A549 (cell line): ENCODE measurements at regions of chr10 and their contacts with region 1.

Region 1: DNA sequence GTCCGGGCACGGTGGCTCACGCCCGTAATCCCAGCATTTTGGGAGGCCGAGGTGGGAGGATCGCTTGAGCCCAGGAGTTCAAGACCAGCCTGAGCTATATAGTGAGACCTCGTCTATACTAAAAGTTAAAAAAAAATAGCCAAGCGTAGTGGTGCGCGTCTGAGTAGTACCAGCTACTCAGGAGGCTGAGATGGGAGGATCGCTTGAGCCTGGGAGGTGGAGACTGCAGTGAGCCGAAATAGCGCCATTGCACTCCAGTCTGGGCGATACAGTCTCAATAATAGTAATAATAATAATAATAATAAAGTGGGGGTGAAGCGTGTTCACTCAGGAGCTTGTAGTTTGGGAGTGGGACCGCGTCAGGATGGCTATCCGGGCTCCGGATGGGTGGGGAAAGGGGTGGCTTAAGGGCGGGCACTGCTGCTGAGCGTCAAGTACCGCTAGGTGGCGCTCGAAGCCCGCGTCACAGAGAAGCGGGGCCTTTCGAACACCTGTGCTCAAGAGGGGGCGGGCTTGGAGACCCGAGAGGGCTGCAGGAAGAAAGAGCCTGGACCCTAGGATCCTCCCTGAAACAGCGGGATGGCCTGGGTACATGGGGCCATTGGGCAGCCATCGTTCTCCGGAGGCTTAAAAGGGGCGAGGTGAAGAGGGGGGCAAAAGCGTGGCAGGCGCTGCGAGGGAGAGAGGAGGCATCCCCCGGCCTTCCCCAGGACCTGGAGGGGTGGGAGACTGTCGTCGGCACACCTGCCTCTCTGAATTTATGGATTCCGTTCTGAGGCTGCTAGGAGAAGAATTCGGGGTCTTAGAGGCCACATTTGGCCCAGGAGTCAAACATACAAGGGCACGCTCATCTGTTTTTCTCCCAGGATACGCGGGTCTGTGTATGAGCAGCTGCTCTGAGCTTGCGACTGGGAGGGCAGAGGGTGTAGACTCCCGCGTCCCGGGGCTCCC is 14.5 kb downstream of the LBX1 start:
- DNase-seq: peak; percentile 66 to 74
- ATAC-seq: peak; percentile 69 to 86
- H3K4me3 ChIP-seq: peak overlapping the region; percentile 40
- H3K27ac ChIP-seq: no peak overlapping the region
- H3K4me1 ChIP-seq: no peaks in the 10 kb centered on the region
- CTCF ChIP-seq: peak; percentile 93
- EP300 ChIP-seq: no peak
- POLR2A ChIP-seq: no peak
- RAD21 ChIP-seq: peak; percentile 91 to 93

Region 2: GRCh38 chr10:101130984-101131961 is 83.4 kb before region 1 on chr10 and contains the start of gene TLX1:
- CTCF ChIA-PET with region 1: no interaction called
- POLR2A ChIA-PET with region 1: no interaction called
- DNase-seq: no peak
- ATAC-seq: peak; percentile 32 to 66; a peak in 3 of 6 replicates
- H3K4me3 ChIP-seq: peak within 1 kb of the TSS; percentile 33; the same call in 2 of the 3 replicates
- H3K27ac ChIP-seq: peak within 1 kb of the TSS in 1 of 2 experiments; percentile 53; a peak in 2 of 6 replicates
- H3K4me1 ChIP-seq: no peaks in the 10 kb centered on the region
- CTCF ChIP-seq: no peak
- EP300 ChIP-seq: no peak
- POLR2A ChIP-seq: no peak
- RAD21 ChIP-seq: no peak
- polyA plus RNA-seq, gene TLX1: 0.06 and 0.09 TPM in 2 replicates

Region 3: DNA sequence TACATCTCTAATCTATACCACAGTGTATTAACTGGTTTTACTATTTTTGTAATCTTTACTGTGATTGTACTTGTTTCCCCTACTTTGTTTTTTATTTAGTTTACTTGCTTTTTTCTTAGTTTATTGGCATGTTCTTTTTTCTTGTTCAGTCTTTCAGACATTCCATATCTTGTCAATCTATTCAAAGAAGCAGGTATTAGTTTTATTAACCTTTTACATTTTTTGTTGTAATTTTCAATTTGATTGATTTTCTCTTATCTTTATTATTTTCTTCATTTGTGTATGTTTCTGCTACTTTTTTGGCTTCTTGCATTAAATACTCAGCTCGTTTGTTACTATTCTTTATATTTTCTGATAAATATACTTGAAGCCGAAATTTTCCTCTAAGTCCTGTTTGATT is 42.0 kb before region 1 on chr10:
- CTCF ChIA-PET with region 1: interaction called, 12 read pairs
- POLR2A ChIA-PET with region 1: no interaction called
- DNase-seq: no peak
- ATAC-seq: no peak
- H3K4me3 ChIP-seq: no peak overlapping the region
- H3K27ac ChIP-seq: no peak overlapping the region
- H3K4me1 ChIP-seq: no peaks in the 10 kb centered on the region
- CTCF ChIP-seq: no peak
- EP300 ChIP-seq: no peak
- POLR2A ChIP-seq: no peak
- RAD21 ChIP-seq: no peak

Region 4: DNA sequence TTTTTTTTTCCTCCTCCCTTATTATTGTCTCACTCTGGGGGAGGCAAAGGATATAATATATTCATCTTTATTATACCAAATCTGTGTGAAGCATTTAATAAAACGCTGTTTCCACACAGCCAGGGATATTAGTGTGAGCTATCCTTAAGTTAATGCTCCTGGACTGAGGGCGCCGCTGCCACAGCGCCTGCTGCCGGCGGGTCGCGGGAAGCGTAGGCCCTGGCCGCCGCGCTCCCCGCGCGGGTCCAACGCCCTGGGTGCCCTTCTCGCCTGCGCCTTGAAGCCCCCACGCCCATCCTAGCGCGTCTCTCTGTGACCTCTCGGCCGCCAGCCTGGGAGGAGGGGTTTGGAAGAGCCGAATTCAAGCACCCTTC is 24.0 kb after region 1 on chr10:
- CTCF ChIA-PET with region 1: interaction called, 63 read pairs
- POLR2A ChIA-PET with region 1: no interaction called
- DNase-seq: no peak
- ATAC-seq: peak; percentile 49 to 82; a peak in 4 of 6 replicates
- H3K4me3 ChIP-seq: no peak overlapping the region
- H3K27ac ChIP-seq: no peak overlapping the region
- H3K4me1 ChIP-seq: no peaks in the 10 kb centered on the region
- CTCF ChIP-seq: peak; percentile 47
- EP300 ChIP-seq: no peak
- POLR2A ChIP-seq: no peak
- RAD21 ChIP-seq: no peak

Region 5: DNA sequence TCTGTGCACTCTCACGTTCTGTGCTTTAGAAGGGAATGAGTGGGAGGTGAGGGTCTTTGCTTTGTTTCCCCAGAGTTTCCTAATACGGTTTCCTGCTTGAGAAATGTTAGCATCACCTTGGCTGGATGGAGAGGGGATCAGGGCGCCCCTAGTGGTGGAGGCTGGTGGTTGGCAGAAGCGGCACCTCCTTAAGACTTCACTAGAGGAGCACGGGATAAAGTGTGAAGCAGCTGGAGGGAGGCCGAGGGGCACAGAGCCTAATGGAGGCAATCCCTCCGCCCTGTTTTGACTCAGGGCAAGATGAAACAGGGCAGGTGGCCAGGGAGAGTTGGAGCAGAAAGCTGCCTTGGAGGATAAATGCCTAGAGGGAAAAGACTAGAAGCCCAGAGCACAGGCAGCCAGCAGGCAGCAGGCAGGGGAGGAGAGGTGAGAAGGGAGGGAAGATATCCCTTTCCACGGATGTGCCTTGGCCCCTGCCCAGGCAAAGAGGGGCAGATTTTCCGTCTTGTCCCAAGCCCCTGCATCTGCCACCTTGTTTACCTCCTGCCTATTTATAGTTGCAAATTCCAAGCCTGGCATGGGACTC is 83.3 kb after region 1 on chr10:
- CTCF ChIA-PET with region 1: interaction called, 253 read pairs
- POLR2A ChIA-PET with region 1: no interaction called
- DNase-seq: peak; percentile 74 to 82
- ATAC-seq: peak; percentile 85 to 93
- H3K4me3 ChIP-seq: no peak overlapping the region
- H3K27ac ChIP-seq: no peak overlapping the region
- H3K4me1 ChIP-seq: no peaks in the 10 kb centered on the region
- CTCF ChIP-seq: peak; percentile 87
- EP300 ChIP-seq: no peak
- POLR2A ChIP-seq: no peak
- RAD21 ChIP-seq: peak in 1 of 2 experiments; percentile 32; a peak in 1 of 5 replicates

Region 6: GRCh38 chr10:101467286-101467770 is 252.6 kb after region 1 on chr10:
- CTCF ChIA-PET with region 1: interaction called, 87 read pairs
- POLR2A ChIA-PET with region 1: no interaction called
- DNase-seq: peak; percentile 69 to 76
- ATAC-seq: peak; percentile 87 to 89
- H3K4me3 ChIP-seq: no peak overlapping the region
- H3K27ac ChIP-seq: no peak overlapping the region
- H3K4me1 ChIP-seq: no peaks in the 10 kb centered on the region
- CTCF ChIP-seq: peak; percentile 71
- EP300 ChIP-seq: no peak
- POLR2A ChIP-seq: no peak
- RAD21 ChIP-seq: peak; percentile 46 to 62; a peak in 4 of 5 replicates

Region 7: DNA sequence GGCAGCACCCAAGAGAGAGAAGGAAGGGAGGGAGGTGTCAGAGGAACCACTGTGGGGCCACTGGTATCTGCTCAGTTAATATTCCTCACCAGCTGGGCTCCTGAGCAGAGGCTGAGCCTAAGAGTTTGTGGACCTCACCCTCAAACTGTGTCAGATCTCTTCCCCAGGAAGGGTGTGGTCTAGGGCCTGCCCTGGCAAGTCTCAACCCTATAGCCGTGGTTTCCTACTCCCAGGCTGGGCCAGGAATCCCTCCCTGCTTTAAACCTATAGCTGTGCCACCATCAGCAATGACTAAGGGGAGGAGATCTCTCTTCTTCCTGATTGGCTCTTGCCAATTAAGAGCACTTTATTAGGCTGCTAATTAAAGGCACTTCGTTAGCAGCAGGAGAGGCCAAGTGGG is 343.5 kb after region 1 on chr10:
- CTCF ChIA-PET with region 1: interaction called, 10 read pairs
- POLR2A ChIA-PET with region 1: no interaction called
- DNase-seq: no peak
- ATAC-seq: no peak
- H3K4me3 ChIP-seq: no peak overlapping the region
- H3K27ac ChIP-seq: 0 out of 6 replicates have a peak overlapping the region, but pooled peaks of 1 of the 2 experiments have one; percentile 2
- H3K4me1 ChIP-seq: peaks cover 5% of the 10 kb centered on the region; the same call in 1 of the 3 replicates
- CTCF ChIP-seq: no peak
- EP300 ChIP-seq: no peak
- POLR2A ChIP-seq: no peak
- RAD21 ChIP-seq: no peak

Region 8: DNA sequence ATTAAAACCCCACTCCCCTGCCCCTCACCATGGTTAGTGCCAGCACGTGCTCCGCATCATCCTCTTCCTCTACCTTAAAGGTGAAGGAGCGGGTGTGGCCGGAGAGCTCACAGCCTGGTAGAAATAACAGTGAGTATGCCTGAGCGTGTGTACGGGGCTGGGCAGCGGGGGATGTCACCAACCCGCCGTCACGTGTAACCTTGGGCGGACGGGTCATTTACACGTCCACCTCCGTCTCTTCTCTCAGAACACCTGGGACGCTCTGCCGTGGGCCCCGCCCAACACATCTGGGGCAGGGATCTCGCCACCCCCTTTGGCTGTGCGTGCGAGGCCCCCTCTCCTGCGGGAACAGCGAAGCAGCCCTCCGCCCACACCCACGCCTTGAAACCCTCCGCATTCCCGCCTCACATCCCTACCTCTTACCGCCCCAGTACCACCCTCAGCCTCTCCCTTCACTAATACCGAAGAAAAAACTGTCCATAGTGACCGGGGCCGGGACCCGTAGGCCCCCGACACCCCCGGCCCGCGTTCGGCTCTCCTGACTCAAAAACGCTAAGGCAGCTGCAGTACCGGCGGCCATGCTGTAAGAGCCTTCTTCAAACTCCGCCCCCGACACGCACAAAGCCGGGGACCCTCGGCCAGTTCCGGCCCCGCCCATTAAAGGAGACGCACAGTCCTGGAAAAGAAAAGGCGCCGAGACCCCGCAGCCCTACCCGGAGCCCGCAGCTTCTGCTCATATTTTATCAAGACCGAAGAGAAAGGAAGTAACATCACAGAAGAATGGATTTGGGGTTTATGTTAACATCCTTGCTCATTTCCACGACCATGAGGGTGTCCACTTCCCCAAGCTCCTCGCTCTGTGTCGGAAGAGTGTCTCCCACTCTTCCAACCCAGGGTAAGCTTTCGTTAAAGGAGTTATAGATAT is 568.4 kb after region 1 on chr10 and contains the start of gene NPM3:
- CTCF ChIA-PET with region 1: interaction called, 70 read pairs
- POLR2A ChIA-PET with region 1: no interaction called
- DNase-seq: peak; percentile 81 to 94
- ATAC-seq: peak; percentile 64 to 81
- H3K4me3 ChIP-seq: peak within 1 kb of the TSS; percentile 72
- H3K27ac ChIP-seq: peak within 1 kb of the TSS; percentile 84 to 93
- H3K4me1 ChIP-seq: peaks cover 32% of the 10 kb centered on the region
- CTCF ChIP-seq: no peak
- EP300 ChIP-seq: no peak
- POLR2A ChIP-seq: peak; percentile 51
- RAD21 ChIP-seq: no peak
- polyA plus RNA-seq, gene NPM3: 41.5 and 45.0 TPM in 2 replicates